IMR-90 (cell line): ENCODE measurements at regions of chr10 and their contacts with region 1.

Region 1: DNA sequence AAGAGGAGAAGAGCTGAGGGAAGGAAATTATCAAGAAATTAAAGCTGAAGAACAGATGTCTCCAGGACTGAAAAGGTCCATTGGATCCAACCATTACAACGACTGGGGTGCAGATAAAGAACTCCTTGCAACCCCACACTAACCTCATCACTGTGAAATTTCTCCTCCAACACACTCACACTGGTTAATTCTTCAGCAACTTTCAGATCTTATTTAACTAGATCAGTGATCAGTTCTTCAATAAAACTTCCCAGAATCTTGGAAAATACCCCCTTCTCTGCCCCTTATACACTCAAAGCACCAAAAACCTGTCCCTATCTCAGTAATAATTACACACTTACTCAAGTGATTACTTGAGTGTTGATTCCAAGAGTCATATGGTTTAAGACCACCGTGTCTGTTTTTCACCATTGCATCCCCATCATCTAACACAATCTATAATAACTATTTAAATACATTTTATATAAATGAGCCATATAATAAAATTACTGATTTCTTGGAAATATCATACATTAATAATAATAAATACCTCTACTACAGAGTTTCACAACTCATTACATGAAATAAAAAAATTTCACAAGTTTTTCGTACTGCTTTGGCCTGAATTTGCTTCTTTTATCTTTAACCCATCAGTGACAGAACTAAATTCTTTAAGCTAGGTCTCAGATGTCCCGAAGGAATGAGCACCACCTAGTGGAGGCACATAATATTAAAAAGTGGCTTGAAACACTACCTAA is 123.7 kb downstream of the MPP7 start:
- DNase-seq: peak; percentile 62
- ATAC-seq: peak; percentile 79
- H3K4me3 ChIP-seq: no peak overlapping the region
- H3K27ac ChIP-seq: no peak overlapping the region
- H3K4me1 ChIP-seq: 0 out of 2 replicates have a peak, but pooled peaks cover 2% of the 10 kb centered on the region
- H3K27me3 ChIP-seq: no peaks in the 10 kb centered on the region
- CTCF ChIP-seq: peak; percentile 80
- POLR2A ChIP-seq: 0 out of 2 replicates have a peak, but pooled peaks have one; percentile 30
- RAD21 ChIP-seq: peak; percentile 89

Region 2: DNA sequence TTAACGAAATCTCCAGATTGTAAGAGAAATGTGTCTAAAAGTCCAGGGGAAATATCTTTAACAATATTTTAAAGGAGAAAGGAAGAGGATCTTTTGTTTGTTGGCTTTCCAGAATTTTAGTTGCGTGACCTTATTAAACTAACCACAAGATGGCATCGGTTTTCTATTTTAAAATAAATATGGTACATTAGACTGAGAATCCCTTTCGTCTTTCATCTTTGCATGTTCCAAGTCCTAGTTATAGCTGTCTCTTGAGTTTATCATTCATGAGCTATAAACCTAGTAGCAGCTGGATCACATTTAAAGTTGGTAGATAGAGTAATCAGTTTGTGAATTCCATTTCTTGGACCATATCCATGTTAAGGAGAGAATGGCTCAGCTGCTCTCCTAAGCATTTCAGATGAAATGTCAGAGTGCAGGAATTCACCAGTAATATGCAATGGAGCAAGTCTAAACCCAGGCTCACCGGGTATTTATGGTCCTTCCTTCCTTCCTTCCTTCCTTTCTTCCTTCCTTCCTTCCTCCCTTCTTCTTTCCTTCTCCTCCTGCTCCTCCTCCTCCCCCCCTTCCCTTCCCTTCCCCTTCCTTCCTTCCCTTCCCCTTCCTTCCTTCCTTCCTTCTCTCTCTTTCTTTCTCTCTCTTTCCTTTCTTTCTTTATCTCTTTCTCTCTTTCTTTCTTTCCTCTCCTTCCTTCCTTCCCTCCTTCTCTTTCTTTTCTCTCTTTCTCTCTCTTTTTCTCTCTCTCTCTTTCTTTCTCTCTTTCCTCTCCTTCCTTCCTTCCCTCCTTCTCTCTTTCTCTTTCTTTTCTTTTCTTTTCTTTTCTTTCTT is 732.9 kb before region 1 on chr10:
- CTCF ChIA-PET with region 1: no interaction called
- POLR2A ChIA-PET with region 1: no interaction called
- dilution Hi-C with region 1: no loop called
- in situ Hi-C with region 1: no loop called
- intact Hi-C with region 1: loop called (anchors 5 kb)
- DNase-seq: peak; percentile 47
- ATAC-seq: peak; percentile 90
- H3K4me3 ChIP-seq: no peak overlapping the region
- H3K27ac ChIP-seq: peak overlapping the region; percentile 74; the same call in 1 of the 2 replicates
- H3K4me1 ChIP-seq: no peaks in the 10 kb centered on the region
- H3K27me3 ChIP-seq: no peaks in the 10 kb centered on the region; the same call in 1 of the 2 replicates
- CTCF ChIP-seq: peak; percentile 56
- POLR2A ChIP-seq: no peak
- RAD21 ChIP-seq: peak; percentile 44

Region 3: DNA sequence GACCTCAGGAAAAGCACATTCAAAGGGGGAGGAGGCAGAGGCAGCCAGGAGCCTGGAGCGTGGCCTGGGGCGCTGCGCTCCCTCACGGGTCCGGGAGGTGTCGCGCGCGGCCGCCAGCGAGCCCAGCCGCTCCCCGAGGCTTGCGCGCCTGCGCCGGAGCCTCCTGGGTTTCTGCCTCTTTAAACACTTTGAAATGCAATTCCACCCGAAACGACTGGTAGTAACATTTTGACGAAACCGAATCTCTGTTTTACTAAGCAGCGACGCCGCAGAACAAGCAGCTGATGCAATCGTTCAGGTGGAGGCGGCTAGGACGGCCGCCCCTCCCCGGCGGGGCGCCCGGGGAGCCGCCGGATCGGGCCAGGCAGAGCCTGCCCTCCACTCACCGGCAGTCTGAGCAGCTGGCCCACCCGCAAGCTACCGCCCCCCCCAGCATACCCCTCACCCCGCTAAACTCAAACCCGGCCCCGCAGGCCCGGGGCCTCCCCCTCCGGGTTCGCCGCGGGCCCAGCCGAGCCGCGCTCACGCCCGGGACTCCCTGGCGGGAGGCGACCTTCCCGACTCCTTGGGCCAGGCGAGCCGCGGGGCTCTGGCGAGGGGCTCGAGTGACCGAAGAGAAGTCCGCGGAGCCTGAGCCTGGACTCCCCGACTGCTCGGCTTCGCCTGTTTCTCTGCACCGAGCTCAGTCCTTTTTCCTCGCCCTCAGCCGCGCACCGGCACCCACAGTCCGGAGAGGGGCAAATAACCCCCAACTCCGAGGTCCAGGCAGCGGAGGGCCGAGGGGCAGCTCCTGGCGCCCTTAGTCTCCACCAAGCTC is 436.8 kb before region 1 on chr10:
- CTCF ChIA-PET with region 1: interaction called, 3 read pairs
- POLR2A ChIA-PET with region 1: no interaction called
- dilution Hi-C with region 1: no loop called
- in situ Hi-C with region 1: loop called (anchors 25 kb)
- intact Hi-C with region 1: loop called (anchors 1 kb)
- DNase-seq: peak; percentile 85
- ATAC-seq: peak; percentile 85
- H3K4me3 ChIP-seq: peak overlapping the region; percentile 33
- H3K27ac ChIP-seq: peak overlapping the region; percentile 38
- H3K4me1 ChIP-seq: peaks cover 3% of the 10 kb centered on the region; the same call in 1 of the 2 replicates
- H3K27me3 ChIP-seq: peaks cover 46% of the 10 kb centered on the region
- CTCF ChIP-seq: peak; percentile 89
- POLR2A ChIP-seq: peak; percentile 61
- RAD21 ChIP-seq: peak; percentile 83

Region 4: GRCh38 chr10:27865221-27865638 is 313.9 kb before region 1 on chr10:
- CTCF ChIA-PET with region 1: no interaction called
- POLR2A ChIA-PET with region 1: no interaction called
- dilution Hi-C with region 1: no loop called
- in situ Hi-C with region 1: no loop called
- intact Hi-C with region 1: loop called (anchors 5 kb)
- DNase-seq: peak; percentile 23
- ATAC-seq: peak; percentile 62
- H3K4me3 ChIP-seq: no peak overlapping the region
- H3K27ac ChIP-seq: no peak overlapping the region
- H3K4me1 ChIP-seq: peaks cover 2% of the 10 kb centered on the region; the same call in 1 of the 2 replicates
- H3K27me3 ChIP-seq: no peaks in the 10 kb centered on the region
- CTCF ChIP-seq: peak; percentile 20; the same call in 1 of the 2 replicates
- POLR2A ChIP-seq: no peak
- RAD21 ChIP-seq: no peak

Region 5: DNA sequence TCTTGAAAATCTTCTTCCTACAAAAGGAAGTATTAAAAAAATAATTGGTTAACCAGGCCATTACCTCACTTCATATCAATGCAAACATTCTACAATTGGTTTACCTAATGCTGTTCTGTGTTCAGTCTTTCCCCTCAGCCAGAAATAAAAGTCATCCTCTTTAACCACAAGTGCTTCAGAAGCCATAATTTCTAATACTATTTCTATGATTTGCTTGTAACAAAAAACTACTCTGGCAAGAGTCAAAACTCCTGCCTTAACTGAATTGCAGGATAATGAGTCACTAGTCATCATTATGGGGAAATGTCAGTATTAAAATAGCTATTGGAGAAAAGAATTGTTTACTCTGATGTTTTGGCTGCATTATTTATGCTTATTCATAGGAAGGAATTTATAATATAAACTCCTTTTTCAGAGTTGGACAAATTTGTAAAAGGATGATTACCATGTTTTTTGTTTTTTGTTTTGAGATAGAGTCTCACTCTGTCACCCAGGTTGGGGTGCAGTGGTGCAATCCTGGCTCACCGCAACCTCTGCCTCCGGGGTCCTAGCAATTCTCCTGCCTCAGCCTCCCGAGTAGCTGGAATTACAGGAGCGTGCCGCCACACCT is 124.8 kb before region 1 on chr10:
- CTCF ChIA-PET with region 1: no interaction called
- POLR2A ChIA-PET with region 1: no interaction called
- dilution Hi-C with region 1: no loop called
- in situ Hi-C with region 1: no loop called
- intact Hi-C with region 1: loop called (anchors 10 kb)
- DNase-seq: peak; percentile 98
- ATAC-seq: peak; percentile 94
- H3K4me3 ChIP-seq: no peak overlapping the region
- H3K27ac ChIP-seq: peak overlapping the region; percentile 94
- H3K4me1 ChIP-seq: peaks cover 8% of the 10 kb centered on the region
- H3K27me3 ChIP-seq: no peaks in the 10 kb centered on the region
- CTCF ChIP-seq: no peak
- POLR2A ChIP-seq: no peak
- RAD21 ChIP-seq: no peak